ENCODE measurements at regions of chr10 and their contacts with region 1.

Region 1: GRCh38 chr10:3757638-3758490 is 27.1 kb downstream of the KLF6 start:
- ATAC-seq: no peak
- H3K4me3 ChIP-seq: no peak overlapping the region
- H3K27ac ChIP-seq: no peak overlapping the region
- H3K4me1 ChIP-seq: peaks cover 21 to 23% of the 10 kb centered on the region in 2 donors

Region 2: GRCh38 chr10:3265088-3265487 is 492.8 kb before region 1 on chr10:
- in situ Hi-C with region 1: loop called in 1 of 9 experiments (anchors 25 kb)
- ATAC-seq: peak in 5 of 8 experiments; percentile 74 to 84 (median 79)
- H3K4me3 ChIP-seq: no peak overlapping the region
- H3K27ac ChIP-seq: no peak overlapping the region
- H3K4me1 ChIP-seq: peaks cover 28 to 32% of the 10 kb centered on the region in 2 donors